PC-9 (cell line): ENCODE measurements at regions of chr4 and their contacts with region 1.

Region 1: GRCh38 chr4:153318696-153319320 is 25.7 kb upstream of the MND1 start:
- DNase-seq: peak in 1 of 2 experiments; percentile 8
- H3K4me3 ChIP-seq: no peak overlapping the region
- H3K27ac ChIP-seq: no peak overlapping the region
- H3K4me1 ChIP-seq: no peaks in the 10 kb centered on the region
- H3K27me3 ChIP-seq: no peaks in the 10 kb centered on the region
- CTCF ChIP-seq: peak; percentile 69

Region 2: GRCh38 chr4:152850377-152850776 is 468.4 kb before region 1 on chr4:
- CTCF ChIA-PET with region 1: no interaction called
- POLR2A ChIA-PET with region 1: no interaction called
- intact Hi-C with region 1: loop called (anchors 1 kb)
- DNase-seq: peak; percentile 19 to 64
- H3K4me3 ChIP-seq: no peak overlapping the region
- H3K27ac ChIP-seq: peak overlapping the region; percentile 74
- H3K4me1 ChIP-seq: peaks cover 20% of the 10 kb centered on the region
- H3K27me3 ChIP-seq: no peaks in the 10 kb centered on the region
- CTCF ChIP-seq: no peak

Region 3: DNA sequence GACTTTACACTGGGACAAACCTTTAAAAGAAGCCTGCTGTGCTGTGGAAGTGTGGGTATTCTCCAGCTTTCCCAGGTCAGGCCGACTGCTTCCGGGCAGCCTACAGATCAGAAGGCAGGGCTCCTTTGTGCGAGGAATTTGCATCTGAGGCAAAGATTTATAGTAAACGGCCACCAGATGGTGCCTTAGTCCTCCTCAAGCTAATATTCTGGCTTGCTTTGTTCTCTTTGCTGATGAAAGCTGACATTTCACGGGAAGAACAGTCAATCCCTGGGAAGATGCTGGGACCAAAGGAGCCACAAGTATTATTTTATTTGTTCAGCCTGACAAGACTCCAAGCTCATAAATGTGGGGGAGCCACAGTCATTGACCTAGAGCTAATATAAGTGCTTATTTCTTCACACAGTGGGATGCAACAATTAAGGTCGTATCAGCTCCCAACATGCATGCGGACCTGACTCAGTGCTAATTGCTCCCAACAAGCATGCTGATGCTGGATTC is 235.3 kb before region 1 on chr4:
- CTCF ChIA-PET with region 1: no interaction called
- POLR2A ChIA-PET with region 1: no interaction called
- intact Hi-C with region 1: loop called (anchors 1 kb)
- DNase-seq: peak; percentile 55 to 66
- H3K4me3 ChIP-seq: no peak overlapping the region
- H3K27ac ChIP-seq: peak overlapping the region; percentile 49; the same call in 1 of the 2 replicates
- H3K4me1 ChIP-seq: peaks cover 18% of the 10 kb centered on the region
- H3K27me3 ChIP-seq: no peaks in the 10 kb centered on the region
- CTCF ChIP-seq: peak; percentile 70

Region 4: DNA sequence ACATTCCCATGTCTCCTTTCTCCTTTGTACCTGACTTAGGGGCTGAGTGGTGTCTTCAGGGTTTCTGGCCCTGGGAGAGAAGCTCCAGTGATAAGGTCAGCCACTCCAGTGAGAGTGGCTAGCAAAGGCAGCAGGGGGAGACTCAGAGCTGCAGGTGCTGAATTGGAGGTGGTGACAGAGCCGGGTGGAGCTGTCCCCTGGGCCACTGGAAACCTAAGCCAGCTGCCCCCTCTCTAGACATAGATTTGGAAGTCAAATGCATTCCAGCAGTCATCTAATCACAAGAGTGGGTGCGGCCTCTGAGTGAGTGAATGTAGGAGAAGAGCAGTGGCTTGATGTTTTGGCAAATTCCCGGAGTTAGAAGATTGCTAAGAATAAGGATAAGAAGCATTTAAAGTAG is 86.0 kb before region 1 on chr4:
- CTCF ChIA-PET with region 1: no interaction called
- POLR2A ChIA-PET with region 1: no interaction called
- intact Hi-C with region 1: loop called (anchors 1 kb)
- DNase-seq: peak; percentile 57 to 60
- H3K4me3 ChIP-seq: no peak overlapping the region
- H3K27ac ChIP-seq: peak overlapping the region; percentile 68
- H3K4me1 ChIP-seq: peaks cover 62% of the 10 kb centered on the region
- H3K27me3 ChIP-seq: no peaks in the 10 kb centered on the region
- CTCF ChIP-seq: no peak; the same call in 1 of the 2 replicates

Region 5: DNA sequence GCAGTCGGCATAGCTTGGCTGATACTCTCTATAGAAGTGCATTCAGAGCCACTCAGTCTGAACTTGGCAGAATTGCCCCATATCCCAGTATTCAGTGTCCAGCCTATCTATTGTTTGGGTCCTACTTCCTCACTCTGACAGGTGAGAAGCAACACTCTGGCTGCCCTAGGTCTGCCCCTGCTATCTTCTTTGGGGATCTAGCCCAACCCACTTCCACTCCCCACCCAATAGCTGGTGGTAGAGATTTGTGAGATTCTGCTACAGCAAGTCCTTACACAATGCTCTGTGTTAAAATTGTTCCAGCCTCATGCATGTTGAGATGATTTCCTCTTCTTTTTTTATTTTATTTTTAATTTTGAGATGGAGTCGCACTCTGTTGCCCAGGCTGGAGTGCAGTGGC is 47.0 kb before region 1 on chr4:
- CTCF ChIA-PET with region 1: interaction called, 10 read pairs
- POLR2A ChIA-PET with region 1: no interaction called
- intact Hi-C with region 1: no loop called
- DNase-seq: peak in 1 of 2 experiments; percentile 8
- H3K4me3 ChIP-seq: no peak overlapping the region
- H3K27ac ChIP-seq: no peak overlapping the region
- H3K4me1 ChIP-seq: no peaks in the 10 kb centered on the region
- H3K27me3 ChIP-seq: no peaks in the 10 kb centered on the region
- CTCF ChIP-seq: no peak